ENCODE measurements at regions of chr17 and their contacts with region 1.

Region 1: GRCh38 chr17:74972107-74972972 is at the start of gene HID1:
- DNase-seq: peak; percentile 75 to 87
- H3K4me3 ChIP-seq: peak within 1 kb of the TSS; percentile 90
- H3K4me3 Mint-ChIP-seq: peak within 1 kb of the TSS; percentile 84
- H3K27ac Mint-ChIP-seq: no peak within 1 kb of the TSS
- H3K4me1 ChIP-seq: peaks cover 36% of the 10 kb centered on the region
- H3K4me1 Mint-ChIP-seq: peaks cover 28% of the 10 kb centered on the region
- H3K27me3 ChIP-seq: no peaks in the 10 kb centered on the region
- H3K27me3 Mint-ChIP-seq: peaks cover 2% of the 10 kb centered on the region
- CTCF ChIP-seq: no peak
- total RNA-seq, gene HID1: 29.8 and 30.4 TPM in 2 replicates

Region 2: GRCh38 chr17:75012346-75013091 is 40.2 kb after region 1 on chr17 and contains the start of gene MRPL58:
- CTCF ChIA-PET with region 1: interaction called, 20 read pairs
- POLR2A ChIA-PET with region 1: interaction called, 19 read pairs
- intact Hi-C with region 1: no loop called
- DNase-seq: peak; percentile 88 to 92
- H3K4me3 ChIP-seq: peak within 1 kb of the TSS; percentile 84
- H3K4me3 Mint-ChIP-seq: peak within 1 kb of the TSS; percentile 82
- H3K27ac Mint-ChIP-seq: peak within 1 kb of the TSS; percentile 84
- H3K4me1 ChIP-seq: peaks cover 3% of the 10 kb centered on the region; the same call in 1 of the 2 replicates
- H3K4me1 Mint-ChIP-seq: peaks cover 29% of the 10 kb centered on the region
- H3K27me3 ChIP-seq: no peaks in the 10 kb centered on the region
- H3K27me3 Mint-ChIP-seq: no peaks in the 10 kb centered on the region
- CTCF ChIP-seq: peak; percentile 68 to 79
- total RNA-seq, gene MRPL58: 61.0 and 61.8 TPM in 2 replicates

Region 3: DNA sequence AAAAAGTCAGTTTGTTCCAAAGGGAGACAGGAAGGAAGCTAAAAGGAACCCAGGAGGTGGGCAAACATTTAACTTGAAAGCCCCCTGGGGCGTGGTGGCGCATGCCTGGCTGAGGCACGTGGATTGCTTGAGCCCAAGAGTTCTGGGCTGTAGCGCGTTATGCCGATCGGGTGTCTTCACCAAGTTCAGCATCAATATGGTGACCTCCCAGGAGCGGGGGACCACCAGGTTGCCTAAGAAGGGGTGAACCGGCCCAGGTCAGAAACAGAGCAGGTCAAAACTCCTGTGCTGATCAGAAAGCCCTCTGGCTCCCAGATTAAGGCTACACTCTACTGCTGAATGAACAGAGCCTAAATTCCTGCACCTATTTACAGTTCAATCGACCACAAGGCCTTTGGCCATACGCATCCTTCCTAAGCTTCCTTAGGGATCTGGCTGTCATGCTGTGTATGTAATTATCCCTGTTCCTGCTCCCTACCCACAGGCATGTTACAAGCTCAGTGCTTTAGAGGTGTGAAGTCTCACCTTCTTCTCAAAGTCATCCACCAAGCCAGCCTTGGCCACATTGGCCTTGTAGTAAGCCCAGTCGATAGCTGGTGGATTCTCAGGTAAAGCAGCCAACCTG is 69.4 kb after region 1 on chr17:
- CTCF ChIA-PET with region 1: no interaction called
- POLR2A ChIA-PET with region 1: no interaction called
- intact Hi-C with region 1: no loop called
- DNase-seq: no peak
- H3K4me3 ChIP-seq: no peak overlapping the region
- H3K4me3 Mint-ChIP-seq: no peak overlapping the region
- H3K27ac Mint-ChIP-seq: no peak overlapping the region
- H3K4me1 ChIP-seq: peaks cover 7% of the 10 kb centered on the region; the same call in 1 of the 2 replicates
- H3K4me1 Mint-ChIP-seq: peaks cover 3% of the 10 kb centered on the region
- H3K27me3 ChIP-seq: no peaks in the 10 kb centered on the region
- H3K27me3 Mint-ChIP-seq: no peaks in the 10 kb centered on the region
- CTCF ChIP-seq: no peak

Region 4: GRCh38 chr17:75182569-75183450 is 210.5 kb after region 1 on chr17 and contains the start of gene SUMO2:
- CTCF ChIA-PET with region 1: no interaction called
- POLR2A ChIA-PET with region 1: interaction called, 12 read pairs
- intact Hi-C with region 1: no loop called
- DNase-seq: peak; percentile 95 to 96
- H3K4me3 ChIP-seq: peak within 1 kb of the TSS; percentile 94
- H3K4me3 Mint-ChIP-seq: peak within 1 kb of the TSS; percentile 88
- H3K27ac Mint-ChIP-seq: peak within 1 kb of the TSS; percentile 99
- H3K4me1 ChIP-seq: peaks cover 18% of the 10 kb centered on the region
- H3K4me1 Mint-ChIP-seq: peaks cover 17% of the 10 kb centered on the region
- H3K27me3 ChIP-seq: no peaks in the 10 kb centered on the region
- H3K27me3 Mint-ChIP-seq: no peaks in the 10 kb centered on the region
- CTCF ChIP-seq: peak; percentile 39
- total RNA-seq, gene SUMO2: 675 and 693 TPM in 2 replicates